Endothelial cell of umbilical vein (primary cell): ENCODE measurements at regions of chr12 and their contacts with region 1.

Region 1: DNA sequence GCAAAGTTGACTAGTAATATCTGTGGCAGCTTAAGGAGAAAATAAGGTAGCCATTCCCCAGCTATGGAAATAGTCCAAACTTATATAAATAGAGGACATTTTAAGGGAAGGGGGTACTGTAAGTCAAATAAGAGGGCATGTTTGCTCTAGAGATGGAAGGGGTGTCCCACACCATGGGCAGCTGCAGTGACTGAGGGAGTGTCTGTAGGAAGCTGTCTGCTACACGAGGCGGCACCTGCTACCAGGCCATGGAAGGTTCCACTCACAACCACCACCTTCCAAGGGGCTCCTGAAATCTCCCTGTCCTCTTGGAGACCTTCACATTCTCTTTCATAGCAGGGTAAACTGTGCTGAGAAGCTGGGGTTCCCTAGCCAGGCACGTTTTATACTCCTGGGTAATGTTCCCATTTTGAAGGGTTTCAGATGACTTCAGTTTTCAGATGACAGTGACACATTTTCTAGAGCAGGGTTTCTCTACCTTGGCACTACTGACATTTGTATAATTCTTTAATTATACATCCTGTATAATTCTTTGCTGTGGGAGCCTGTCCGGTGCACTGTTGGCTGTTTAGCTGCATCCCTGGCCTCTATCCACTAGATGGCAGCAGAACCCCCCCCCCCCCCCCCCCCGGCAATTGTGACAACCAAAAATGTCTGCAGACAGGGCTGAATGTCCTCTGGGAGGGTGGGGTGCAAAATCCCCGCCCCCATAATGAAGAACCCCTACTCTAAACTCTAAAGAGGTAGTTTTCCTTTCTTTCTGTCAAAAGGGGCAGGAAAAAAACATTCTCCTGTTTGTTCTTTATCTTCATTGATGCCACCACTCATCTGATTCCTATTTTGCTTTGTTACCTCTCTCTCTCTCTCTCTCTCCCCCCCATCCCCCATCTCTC is 11.6 kb upstream of the SMCO2 start:
- DNase-seq: peak; percentile 17
- H3K4me3 ChIP-seq: no peak overlapping the region
- H3K27ac ChIP-seq: no peak overlapping the region
- H3K4me1 ChIP-seq: peaks cover 4% of the 10 kb centered on the region
- H3K27me3 ChIP-seq: no peaks in the 10 kb centered on the region
- CTCF ChIP-seq: peak; percentile 45 to 69
- POLR2A ChIP-seq: no peak

Region 2: GRCh38 chr12:27449026-27449425 is 14.1 kb after region 1 on chr12:
- CTCF ChIA-PET with region 1: interaction called, 27 read pairs
- POLR2A ChIA-PET with region 1: no interaction called
- dilution Hi-C with region 1: no loop called
- intact Hi-C with region 1: no loop called
- DNase-seq: no peak
- H3K4me3 ChIP-seq: no peak overlapping the region
- H3K27ac ChIP-seq: no peak overlapping the region
- H3K4me1 ChIP-seq: no peaks in the 10 kb centered on the region
- H3K27me3 ChIP-seq: no peaks in the 10 kb centered on the region
- CTCF ChIP-seq: no peak
- POLR2A ChIP-seq: no peak

Region 3: DNA sequence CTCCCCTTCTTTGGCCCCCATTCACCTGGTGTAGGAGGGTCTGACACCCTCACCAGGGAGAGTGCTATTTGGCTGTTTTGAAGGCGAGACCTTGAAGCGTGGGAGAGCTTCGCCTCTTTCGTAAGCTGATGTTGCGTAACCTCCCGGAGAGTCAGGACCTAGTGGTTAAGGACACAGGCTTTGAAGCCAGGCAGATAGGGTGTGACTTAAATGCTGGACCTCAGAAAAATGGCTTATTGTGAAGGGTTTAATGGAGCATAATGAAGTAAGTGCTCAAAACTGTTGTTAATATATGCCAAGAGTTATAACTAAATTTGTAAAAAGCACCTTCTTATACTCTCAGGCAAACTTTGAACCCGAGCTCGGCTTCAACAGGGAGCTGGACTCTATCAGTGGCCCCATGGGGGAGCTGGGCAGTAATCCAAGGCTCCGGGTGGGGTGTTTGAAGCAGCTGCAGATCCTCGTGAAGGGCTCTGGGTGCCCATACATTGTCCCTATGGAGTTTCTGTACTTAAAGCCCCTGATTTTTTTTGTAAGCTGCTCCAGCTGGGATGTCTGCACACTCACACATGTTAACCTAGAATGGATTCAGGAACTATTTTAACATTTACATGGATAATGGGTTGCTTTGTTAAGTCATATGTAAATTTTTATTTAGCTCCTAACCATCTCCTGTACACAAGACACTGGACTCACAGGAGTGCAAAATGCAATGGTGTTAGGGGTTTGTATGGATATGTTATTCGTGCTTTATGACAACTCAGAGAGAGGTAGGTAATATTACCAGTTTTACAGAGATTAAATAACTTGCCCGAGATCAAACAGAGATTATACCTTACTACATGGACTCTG is 115.1 kb after region 1 on chr12:
- CTCF ChIA-PET with region 1: interaction called, 11 read pairs
- POLR2A ChIA-PET with region 1: interaction called, 8 read pairs
- dilution Hi-C with region 1: no loop called
- intact Hi-C with region 1: no loop called
- DNase-seq: peak; percentile 89
- H3K4me3 ChIP-seq: peak overlapping the region in 1 of 3 experiments; percentile 20
- H3K27ac ChIP-seq: peak overlapping the region; percentile 79
- H3K4me1 ChIP-seq: peaks cover 66% of the 10 kb centered on the region
- H3K27me3 ChIP-seq: no peaks in the 10 kb centered on the region
- CTCF ChIP-seq: no peak
- POLR2A ChIP-seq: no peak

Region 4: GRCh38 chr12:27635349-27635972 is 200.5 kb after region 1 on chr12:
- CTCF ChIA-PET with region 1: interaction called, 5 read pairs
- POLR2A ChIA-PET with region 1: interaction called, 5 read pairs
- dilution Hi-C with region 1: no loop called
- intact Hi-C with region 1: loop called (anchors 1 kb)
- DNase-seq: peak; percentile 61
- H3K4me3 ChIP-seq: no peak overlapping the region
- H3K27ac ChIP-seq: no peak overlapping the region
- H3K4me1 ChIP-seq: peaks cover 19% of the 10 kb centered on the region
- H3K27me3 ChIP-seq: no peaks in the 10 kb centered on the region
- CTCF ChIP-seq: peak; percentile 28 to 39
- POLR2A ChIP-seq: no peak